ENCODE measurements at regions of chr1 and their contacts with region 1.

Region 1: GRCh38 chr1:165597883-165598675 is 33.0 kb upstream of the MGST3 start:
- DNase-seq: peak; percentile 97
- H3K4me3 ChIP-seq: peak overlapping the region; percentile 68
- H3K27ac ChIP-seq: peak overlapping the region; percentile 16
- H3K4me1 ChIP-seq: peaks cover 31% of the 10 kb centered on the region
- CTCF ChIP-seq: no peak

Region 2: GRCh38 chr1:165610885-165611284 is 12.8 kb after region 1 on chr1:
- CTCF ChIA-PET with region 1: interaction called, 3 read pairs
- POLR2A ChIA-PET with region 1: interaction called, 22 read pairs
- intact Hi-C with region 1: no loop called
- DNase-seq: peak; percentile 11
- H3K4me3 ChIP-seq: no peak overlapping the region
- H3K27ac ChIP-seq: no peak overlapping the region
- H3K4me1 ChIP-seq: peaks cover 28% of the 10 kb centered on the region
- CTCF ChIP-seq: no peak

Region 3: GRCh38 chr1:165623624-165624023 is 25.5 kb after region 1 on chr1:
- CTCF ChIA-PET with region 1: no interaction called
- POLR2A ChIA-PET with region 1: no interaction called
- intact Hi-C with region 1: no loop called
- DNase-seq: no peak
- H3K4me3 ChIP-seq: no peak overlapping the region
- H3K27ac ChIP-seq: no peak overlapping the region
- H3K4me1 ChIP-seq: no peaks in the 10 kb centered on the region
- CTCF ChIP-seq: no peak

Region 4: DNA sequence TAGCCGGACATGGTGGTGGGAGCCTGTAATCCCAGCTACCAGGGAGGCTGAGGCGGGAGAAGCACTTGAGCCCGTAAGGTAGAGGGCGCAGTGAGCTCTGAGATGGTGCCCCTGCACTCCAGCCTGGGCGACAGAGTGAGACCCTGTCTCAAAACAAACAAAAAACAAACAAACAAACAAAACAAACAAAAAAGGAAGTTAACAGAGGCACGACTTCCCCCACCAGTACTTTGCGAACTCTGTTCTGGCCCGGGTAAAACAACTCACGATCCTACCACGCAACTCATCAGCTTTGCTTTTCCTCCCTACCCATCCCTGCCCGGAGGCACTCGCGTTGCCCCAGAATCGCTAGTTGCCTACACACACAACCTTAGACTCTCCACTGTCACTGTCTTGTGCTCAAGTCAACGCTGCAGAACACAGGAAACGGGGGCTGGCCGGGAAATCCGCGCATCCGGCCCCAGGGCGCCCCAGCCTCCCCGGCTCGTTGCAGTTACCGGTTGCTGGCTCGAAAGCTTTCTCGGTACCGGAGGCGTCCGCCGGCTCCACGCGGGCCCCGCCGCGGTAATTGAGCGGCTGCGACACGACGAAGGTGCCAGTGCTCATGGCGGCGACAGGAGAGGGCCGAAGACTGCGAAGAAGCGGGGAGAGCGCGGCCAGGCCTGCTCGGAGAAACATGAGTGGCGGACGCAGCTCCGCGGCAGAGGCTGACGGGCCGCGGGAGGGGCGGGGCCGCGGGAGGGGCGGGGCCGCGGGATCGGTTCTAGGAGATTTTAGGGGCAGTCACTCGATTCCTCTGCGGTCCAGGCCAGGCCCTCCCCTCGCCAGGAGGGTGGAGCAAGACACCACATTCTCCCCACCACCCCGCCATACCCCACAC is 100.0 kb after region 1 on chr1 and contains the start of gene ALDH9A1:
- CTCF ChIA-PET with region 1: interaction called, 3 read pairs
- POLR2A ChIA-PET with region 1: interaction called, 22 read pairs
- intact Hi-C with region 1: loop called (anchors 1 kb)
- DNase-seq: peak; percentile 87
- H3K4me3 ChIP-seq: peak within 1 kb of the TSS; percentile 68
- H3K27ac ChIP-seq: peak within 1 kb of the TSS; percentile 85
- H3K4me1 ChIP-seq: peaks cover 4% of the 10 kb centered on the region
- CTCF ChIP-seq: peak; percentile 69
- total RNA-seq, gene ALDH9A1: 22.5 and 36.0 TPM in 2 replicates

Region 5: GRCh38 chr1:165768513-165769394 is 170.7 kb after region 1 on chr1 and contains the start of gene TMCO1:
- CTCF ChIA-PET with region 1: interaction called, 3 read pairs
- POLR2A ChIA-PET with region 1: no interaction called
- intact Hi-C with region 1: loop called (anchors 2 kb)
- DNase-seq: peak; percentile 99
- H3K4me3 ChIP-seq: peak within 1 kb of the TSS; percentile 85
- H3K27ac ChIP-seq: peak within 1 kb of the TSS; percentile 78
- H3K4me1 ChIP-seq: peaks cover 17% of the 10 kb centered on the region
- CTCF ChIP-seq: peak; percentile 38; the same call in 1 of the 2 replicates
- total RNA-seq, gene TMCO1: 22.9 and 23.7 TPM in 2 replicates

Region 6: DNA sequence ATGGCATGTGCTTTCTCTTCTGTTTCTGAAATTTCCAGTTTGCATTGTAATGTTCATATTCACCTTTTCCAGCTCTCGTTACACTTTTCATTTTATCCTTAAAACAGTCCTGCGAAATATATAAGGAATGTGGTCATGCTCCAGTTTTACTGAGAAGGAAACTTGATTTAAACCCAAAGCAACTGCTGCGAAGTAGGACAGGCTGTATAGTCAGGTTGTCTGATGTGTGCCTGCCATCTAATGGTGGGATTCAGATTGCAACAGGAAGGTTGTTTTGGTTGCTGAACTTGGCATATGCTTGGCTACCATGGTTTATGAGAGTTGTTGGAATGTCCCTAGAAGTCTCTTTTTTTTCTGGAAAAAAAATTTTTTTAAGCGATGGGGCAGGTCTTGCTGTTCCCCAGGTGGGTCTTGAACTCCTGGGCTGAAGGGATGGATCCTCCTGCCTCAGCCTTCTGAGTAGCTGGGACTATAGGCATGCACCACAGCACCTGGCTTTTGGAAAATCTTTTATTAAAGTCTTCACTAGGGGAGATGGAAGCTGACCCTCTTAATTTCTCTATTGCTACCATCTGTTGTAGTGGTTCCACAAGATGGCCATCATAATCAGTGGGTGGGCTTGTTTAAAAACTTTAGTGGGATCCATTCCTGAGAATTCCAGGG is 316.2 kb after region 1 on chr1:
- CTCF ChIA-PET with region 1: no interaction called
- POLR2A ChIA-PET with region 1: interaction called, 4 read pairs
- intact Hi-C with region 1: loop called (anchors 1 kb)
- DNase-seq: peak; percentile 73
- H3K4me3 ChIP-seq: no peak overlapping the region
- H3K27ac ChIP-seq: no peak overlapping the region
- H3K4me1 ChIP-seq: peaks cover 7% of the 10 kb centered on the region
- CTCF ChIP-seq: peak; percentile 96

Measured in OCI-LY7 (cell line).